Activated CD4-positive, alpha-beta T cell treated with anti-CD3 and anti-CD28 coated beads for 36 hours (primary cell): ENCODE measurements at regions of chr4 and their contacts with region 1.

Region 1: DNA sequence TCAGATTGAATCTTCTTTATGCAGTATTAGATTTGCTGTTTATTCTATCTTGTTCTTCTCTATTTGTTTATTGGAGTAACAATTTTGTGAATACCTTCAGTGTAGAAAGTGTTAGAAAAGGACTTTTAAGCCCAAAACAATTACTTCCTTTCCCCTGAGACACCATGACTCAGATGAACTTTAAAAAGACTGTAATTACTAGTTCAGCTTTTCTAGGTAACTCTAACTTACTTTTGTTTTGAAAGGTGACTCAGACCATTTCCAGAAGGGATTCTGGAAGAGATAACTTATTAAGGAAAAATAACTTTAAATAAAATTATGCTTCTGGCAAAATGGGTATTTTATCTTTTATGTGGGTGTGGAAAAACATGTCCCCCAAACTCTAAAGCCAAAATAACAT is 561.5 kb upstream of the PCDH10 start:
- DNase-seq: no peak
- ATAC-seq: no peak
- H3K4me3 Mint-ChIP-seq: no peak overlapping the region
- H3K27ac Mint-ChIP-seq: no peak overlapping the region
- H3K4me1 Mint-ChIP-seq: no peaks in the 10 kb centered on the region
- H3K27me3 Mint-ChIP-seq: no peaks in the 10 kb centered on the region

Region 2: DNA sequence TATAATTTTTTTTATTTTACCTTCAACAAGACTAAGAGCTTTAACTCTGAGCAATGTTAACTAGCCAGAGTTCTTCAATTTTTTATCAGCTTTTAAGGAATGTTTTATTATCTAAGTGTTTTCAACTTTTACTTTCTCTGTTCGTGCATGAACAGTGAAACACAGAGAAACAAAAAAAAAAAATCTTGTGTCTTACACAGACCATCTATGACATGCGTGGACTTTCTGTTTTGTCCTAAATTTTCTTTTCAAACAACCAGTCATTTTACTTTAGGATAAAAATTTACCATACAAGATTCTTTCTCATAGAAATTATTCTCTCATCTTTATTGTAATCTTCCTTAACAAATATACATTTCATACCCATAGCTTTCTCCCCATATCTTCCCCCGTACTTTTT is 170.4 kb before region 1 on chr4:
- CTCF ChIA-PET with region 1: no interaction called
- POLR2A ChIA-PET with region 1: no interaction called
- intact Hi-C with region 1: no loop called
- DNase-seq: no peak
- ATAC-seq: no peak
- H3K4me3 Mint-ChIP-seq: no peak overlapping the region
- H3K27ac Mint-ChIP-seq: no peak overlapping the region
- H3K4me1 Mint-ChIP-seq: no peaks in the 10 kb centered on the region
- H3K27me3 Mint-ChIP-seq: no peaks in the 10 kb centered on the region

Region 3: DNA sequence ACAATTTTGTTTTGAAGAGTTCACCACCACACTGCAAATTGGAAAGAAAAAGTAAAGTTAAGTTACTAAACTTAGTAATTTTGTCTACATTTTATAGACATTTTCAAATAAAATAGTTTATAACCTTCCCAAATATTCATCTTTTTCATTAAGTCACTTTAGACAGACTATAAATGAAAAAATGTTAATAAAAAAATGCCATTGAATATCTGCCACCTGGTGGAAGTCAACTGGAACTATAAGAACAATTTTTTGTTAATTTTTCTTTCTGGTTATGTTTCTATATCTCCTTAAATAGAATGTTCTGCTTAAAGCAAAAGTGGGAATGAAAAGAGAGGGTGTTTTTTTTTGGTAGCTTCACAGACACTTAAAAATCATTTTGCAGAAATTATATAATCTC is 27.1 kb after region 1 on chr4:
- CTCF ChIA-PET with region 1: no interaction called
- POLR2A ChIA-PET with region 1: no interaction called
- intact Hi-C with region 1: loop called in 1 of 2 experiments (anchors 1 kb)
- DNase-seq: no peak
- ATAC-seq: no peak
- H3K4me3 Mint-ChIP-seq: no peak overlapping the region
- H3K27ac Mint-ChIP-seq: no peak overlapping the region
- H3K4me1 Mint-ChIP-seq: no peaks in the 10 kb centered on the region
- H3K27me3 Mint-ChIP-seq: no peaks in the 10 kb centered on the region